Left cardiac atrium (tissue), 4 donors: ENCODE measurements at regions of chr22 and their contacts with region 1.

Region 1: DNA sequence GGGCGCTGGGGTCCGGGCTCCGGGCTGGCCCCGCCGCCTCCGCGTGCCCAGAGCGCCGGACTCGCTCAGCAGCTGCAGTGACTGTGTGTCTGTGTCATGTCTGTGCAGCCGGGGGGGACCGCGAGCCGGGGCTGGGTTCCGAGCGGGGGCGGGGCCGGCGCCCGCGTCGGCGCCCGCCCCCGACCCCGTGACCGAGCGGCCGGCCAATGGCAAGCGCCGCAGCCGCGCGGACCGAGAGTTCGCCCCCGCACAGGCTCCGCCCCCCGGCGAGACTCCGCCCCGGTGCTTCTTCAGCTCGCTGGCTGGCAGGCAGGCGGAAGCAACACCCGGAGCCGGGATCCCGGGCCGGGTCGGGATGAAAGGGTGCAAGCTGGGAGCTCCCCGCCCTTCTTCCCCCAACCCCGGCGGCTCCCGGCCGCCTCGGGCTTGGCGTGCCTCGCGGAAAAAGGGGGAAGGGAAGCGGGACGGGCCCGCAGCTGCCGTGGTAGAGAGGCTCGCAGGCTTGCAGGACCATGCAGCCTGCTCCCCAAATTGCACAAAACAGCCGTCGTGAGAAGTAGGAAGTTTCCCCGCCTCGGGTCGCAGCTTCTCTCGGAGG is 750 bp upstream of the LARGE1 start:
- DNase-seq: peak; percentile 99
- ATAC-seq: peak; percentile 95

Region 2: DNA sequence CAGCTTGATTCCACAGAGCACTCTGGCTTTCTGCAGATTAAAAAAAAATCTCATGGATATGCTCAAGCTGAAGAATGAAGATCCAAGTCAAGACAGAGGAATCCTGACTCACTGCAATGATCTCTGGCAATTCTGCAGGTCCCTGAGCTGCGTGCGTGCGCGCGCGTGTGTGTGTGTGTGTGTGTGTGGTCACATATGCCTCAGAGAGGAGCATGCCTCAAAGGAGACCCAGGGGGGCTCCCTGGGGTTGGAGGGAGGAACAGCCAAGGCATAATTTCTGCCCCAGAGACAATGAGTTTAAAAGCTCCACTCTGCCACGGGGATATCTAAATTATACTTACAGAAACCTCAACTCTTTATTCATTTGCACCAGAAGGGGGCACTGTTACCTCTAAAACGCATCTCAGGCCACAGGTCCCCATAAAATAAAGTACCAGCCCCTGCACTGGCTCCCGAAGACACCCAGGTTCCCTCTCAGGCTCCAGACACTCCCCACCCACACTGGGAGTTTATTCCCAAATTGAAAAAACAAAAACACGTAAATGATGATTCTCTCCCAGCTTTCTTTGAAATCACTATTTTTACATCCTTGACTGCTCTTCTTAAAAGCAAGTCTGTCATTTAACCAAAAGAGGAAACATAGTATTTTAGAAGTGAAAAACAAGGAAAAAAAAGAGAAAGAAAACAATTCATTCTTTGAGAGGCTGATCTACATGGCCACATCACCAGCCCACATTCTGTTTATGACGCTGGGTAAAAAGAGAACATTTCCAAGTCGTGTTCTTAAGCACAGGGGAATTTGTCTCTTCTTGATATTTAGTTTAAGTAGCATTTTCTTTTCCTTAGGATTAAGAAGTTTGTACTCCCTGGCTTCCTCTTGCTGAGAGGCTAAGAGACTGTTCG is 401.7 kb before region 1 on chr22:
- intact Hi-C with region 1: loop called in 1 of 2 experiments (anchors 10 kb)
- DNase-seq: peak; percentile 34
- ATAC-seq: peak; percentile 66 to 78

Region 3: GRCh38 chr22:33781411-33781810 is 139.6 kb before region 1 on chr22:
- intact Hi-C with region 1: loop called in 1 of 2 experiments (anchors 5 kb)
- DNase-seq: no peak
- ATAC-seq: peak; percentile 74 to 77

Region 4: DNA sequence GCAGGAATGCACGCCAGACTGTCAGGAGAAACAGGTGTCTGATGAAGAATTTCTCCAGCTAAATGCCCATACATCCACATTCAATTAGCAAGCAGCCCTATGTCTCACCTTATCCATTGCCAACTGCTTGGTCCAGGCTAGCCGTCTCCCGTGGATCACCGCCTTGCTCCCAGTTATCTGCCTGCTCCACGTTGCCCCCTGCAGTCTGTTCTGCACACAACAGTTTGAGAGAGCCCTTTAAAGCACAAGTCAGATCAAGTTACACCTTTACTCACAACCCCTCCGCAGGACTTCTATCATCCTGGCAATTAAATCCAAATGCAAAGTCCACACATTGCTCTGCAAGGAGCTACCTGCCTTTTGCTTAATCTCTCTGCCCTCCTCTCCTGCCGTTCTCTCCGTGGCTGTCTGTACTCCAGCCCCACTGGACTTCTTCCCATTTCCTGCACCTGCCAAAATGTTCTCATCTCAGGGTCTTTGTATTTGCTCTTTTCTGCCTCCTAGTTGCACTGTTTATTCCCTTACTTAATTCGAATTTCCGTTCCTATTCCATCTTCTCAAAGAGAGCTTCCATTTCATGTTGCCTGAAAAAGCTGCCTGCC is 184.5 kb after region 1 on chr22:
- intact Hi-C with region 1: loop called (anchors 5 kb)
- DNase-seq: peak; percentile 69
- ATAC-seq: peak; percentile 57 to 91

Region 5: GRCh38 chr22:34344702-34345101 is 423.7 kb after region 1 on chr22:
- intact Hi-C with region 1: loop called in 1 of 2 experiments (anchors 10 kb)
- DNase-seq: no peak
- ATAC-seq: no peak